ENCODE measurements at regions of chr6 and their contacts with region 1.

Region 1: DNA sequence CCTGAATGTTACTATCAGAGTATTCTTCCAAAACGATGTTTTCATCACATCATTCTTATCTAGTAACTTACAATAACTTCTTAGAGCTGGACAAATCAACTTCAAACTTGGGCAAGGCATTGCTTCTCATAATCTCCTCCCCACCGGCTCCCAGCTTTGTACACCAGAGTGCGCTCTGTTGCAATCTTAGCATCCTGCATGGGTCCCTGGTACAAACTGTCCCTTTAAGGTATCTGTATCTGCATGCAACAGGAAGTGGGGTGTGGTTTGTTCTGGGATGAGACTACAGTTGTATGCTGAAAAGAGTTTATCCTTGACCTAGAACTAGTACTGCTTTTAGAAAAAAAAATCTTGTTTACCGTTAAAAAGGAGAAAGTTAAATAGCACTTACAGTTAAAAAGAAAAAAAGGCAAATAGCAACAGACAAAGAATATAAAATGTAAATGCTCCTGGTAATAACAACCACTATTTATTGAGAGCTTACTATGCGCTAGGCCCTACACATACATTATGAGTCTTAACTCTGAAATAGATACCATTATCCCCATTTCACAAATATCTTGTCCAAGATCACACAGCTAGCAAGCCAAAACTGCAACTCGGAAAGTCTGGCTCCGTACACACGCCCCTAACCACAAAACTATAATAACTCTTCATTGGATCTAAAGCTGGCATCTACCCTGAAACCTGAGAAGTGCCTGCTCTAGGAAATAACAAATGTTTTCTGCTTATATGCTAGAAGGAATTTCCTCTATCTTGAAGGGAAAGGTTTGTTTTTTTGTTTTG is 9.8 kb upstream of the HECA start:
- DNase-seq: peak; percentile 76
- H3K4me3 Mint-ChIP-seq: peak overlapping the region; percentile 43
- H3K27ac Mint-ChIP-seq: peak overlapping the region; percentile 95
- H3K4me1 Mint-ChIP-seq: peaks cover 38% of the 10 kb centered on the region
- H3K27me3 Mint-ChIP-seq: no peaks in the 10 kb centered on the region

Region 2: GRCh38 chr6:139146317-139146726 is 21.2 kb after region 1 on chr6:
- intact Hi-C with region 1: loop called (anchors 1 kb)
- DNase-seq: no peak
- H3K4me3 Mint-ChIP-seq: peak overlapping the region; percentile 56
- H3K27ac Mint-ChIP-seq: peak overlapping the region; percentile 87
- H3K4me1 Mint-ChIP-seq: peaks cover 84% of the 10 kb centered on the region
- H3K27me3 Mint-ChIP-seq: no peaks in the 10 kb centered on the region

Region 3: DNA sequence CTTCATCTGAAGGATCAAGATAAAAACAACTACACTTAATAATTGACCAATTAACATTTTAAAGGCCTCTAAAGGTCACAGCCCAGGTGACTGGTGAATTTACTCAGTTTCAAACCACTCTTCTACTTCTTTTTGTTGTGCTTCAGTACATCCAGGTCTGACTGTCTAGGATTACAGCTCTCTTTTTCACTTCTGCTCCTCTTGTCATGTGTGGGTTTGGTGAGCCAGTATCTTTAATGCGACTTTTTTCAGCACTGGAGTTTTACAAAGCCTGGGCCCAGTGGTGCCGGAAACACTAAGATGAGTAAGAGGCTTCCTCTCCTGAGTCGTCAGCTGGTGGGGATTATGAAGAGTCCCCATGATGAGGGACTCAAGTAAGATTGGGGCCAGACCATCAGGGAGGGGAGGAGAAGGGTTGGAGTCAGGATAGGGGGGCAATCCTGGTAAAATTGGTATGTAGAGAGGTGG is 36.8 kb after region 1 on chr6:
- intact Hi-C with region 1: loop called (anchors 1 kb)
- DNase-seq: peak; percentile 65
- H3K4me3 Mint-ChIP-seq: peak overlapping the region; percentile 65
- H3K27ac Mint-ChIP-seq: peak overlapping the region; percentile 99
- H3K4me1 Mint-ChIP-seq: peaks cover 61% of the 10 kb centered on the region
- H3K27me3 Mint-ChIP-seq: no peaks in the 10 kb centered on the region

Region 4: GRCh38 chr6:139219271-139219729 is 94.2 kb after region 1 on chr6:
- intact Hi-C with region 1: loop called (anchors 1 kb)
- DNase-seq: peak; percentile 55
- H3K4me3 Mint-ChIP-seq: no peak overlapping the region
- H3K27ac Mint-ChIP-seq: no peak overlapping the region
- H3K4me1 Mint-ChIP-seq: peaks cover 9% of the 10 kb centered on the region
- H3K27me3 Mint-ChIP-seq: peaks cover 3% of the 10 kb centered on the region

Region 5: DNA sequence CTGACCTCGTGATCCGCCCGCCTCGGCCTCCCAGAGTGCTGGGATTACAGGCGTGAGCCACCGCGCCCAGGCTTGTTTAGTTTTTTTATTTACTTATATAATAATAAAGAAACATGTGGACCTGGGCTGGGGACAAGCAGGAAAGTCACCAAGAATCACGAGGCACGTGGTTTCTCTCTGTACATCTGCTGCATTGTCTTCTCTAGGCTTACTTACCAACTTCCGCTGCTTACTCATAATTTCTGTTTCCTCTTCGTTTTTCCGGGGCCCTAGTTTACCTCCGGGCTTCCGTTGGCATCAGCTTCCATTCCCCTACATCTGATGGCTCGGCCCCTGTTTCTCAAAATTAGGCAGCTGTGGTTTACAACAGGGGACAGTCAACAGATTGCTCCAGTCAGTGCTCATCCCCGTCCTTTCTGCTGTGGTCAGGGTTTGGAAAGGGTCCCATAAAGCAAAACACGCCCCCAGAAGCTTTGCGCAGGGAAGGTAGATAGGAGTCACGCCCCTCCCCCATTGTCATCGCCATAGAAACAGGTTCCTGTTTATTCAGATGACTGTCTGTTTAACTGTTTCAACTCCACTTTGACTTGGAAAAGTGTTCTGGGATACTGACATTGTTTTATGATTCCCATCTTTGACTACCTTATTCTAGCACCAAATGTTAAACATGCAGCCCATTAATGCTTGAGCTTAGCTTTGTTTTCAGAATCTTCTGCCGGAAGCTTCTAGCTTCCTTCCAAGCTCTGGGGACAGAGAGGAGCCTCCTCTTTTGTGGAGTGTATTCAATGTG is 198.6 kb after region 1 on chr6:
- intact Hi-C with region 1: loop called (anchors 1 kb)
- DNase-seq: peak; percentile 71
- H3K4me3 Mint-ChIP-seq: peak overlapping the region; percentile 69
- H3K27ac Mint-ChIP-seq: peak overlapping the region; percentile 95
- H3K4me1 Mint-ChIP-seq: peaks cover 19% of the 10 kb centered on the region
- H3K27me3 Mint-ChIP-seq: no peaks in the 10 kb centered on the region

Measured in activated T-helper 2 cell treated with anti-CD3 and anti-CD28 coated beads, Interferon-gamma antibody, Interleukin-2, Interleukin-4, amounts not matched to agents 10 μg/mL and 5 μg/mL and 100 μg/mL, durations not matched to agents 14 hours and 24 hours and 36 hours (primary cell).